ENCODE measurements at regions of chr15 and their contacts with region 1.

Region 1: GRCh38 chr15:80059786-80060355 is 395 bp downstream of the ZFAND6 start:
- DNase-seq: no peak
- H3K4me3 ChIP-seq: peak overlapping the region; percentile 64 to 90 (median 76)
- H3K27ac ChIP-seq: peak overlapping the region; percentile 95 to 100 (median 98)
- H3K4me1 ChIP-seq: peaks cover 27 to 58% (median 49%) of the 10 kb centered on the region in 6 donors
- H3K27me3 ChIP-seq: no peaks in the 10 kb centered on the region
- CTCF ChIP-seq: no peak
- POLR2A ChIP-seq: peak in 2 of 3 donors; percentile 45 to 49

Region 2: DNA sequence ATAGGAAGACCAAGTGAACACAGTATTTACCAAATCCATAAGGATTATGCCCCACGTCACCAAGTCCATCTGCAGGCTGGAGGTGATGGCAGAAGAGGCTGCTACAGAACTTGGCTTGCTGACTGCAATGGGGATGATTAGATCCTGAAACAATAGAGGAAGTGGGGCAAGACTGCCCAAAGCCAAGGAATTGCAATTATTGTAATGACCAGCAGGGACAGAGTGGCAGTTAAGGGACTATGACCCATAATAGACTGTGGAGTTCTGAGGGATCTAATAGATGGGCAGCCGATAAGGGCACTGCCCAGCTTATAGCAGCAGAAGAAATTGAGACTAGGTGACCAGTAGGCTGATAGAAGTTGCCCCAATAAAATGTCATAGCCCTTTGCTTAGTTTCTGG is 519.3 kb before region 1 on chr15:
- intact Hi-C with region 1: no loop called
- DNase-seq: no peak
- H3K4me3 ChIP-seq: no peak overlapping the region
- H3K27ac ChIP-seq: no peak overlapping the region
- H3K4me1 ChIP-seq: no peaks in the 10 kb centered on the region
- H3K27me3 ChIP-seq: no peaks in the 10 kb centered on the region
- CTCF ChIP-seq: no peak
- POLR2A ChIP-seq: no peak

Region 3: DNA sequence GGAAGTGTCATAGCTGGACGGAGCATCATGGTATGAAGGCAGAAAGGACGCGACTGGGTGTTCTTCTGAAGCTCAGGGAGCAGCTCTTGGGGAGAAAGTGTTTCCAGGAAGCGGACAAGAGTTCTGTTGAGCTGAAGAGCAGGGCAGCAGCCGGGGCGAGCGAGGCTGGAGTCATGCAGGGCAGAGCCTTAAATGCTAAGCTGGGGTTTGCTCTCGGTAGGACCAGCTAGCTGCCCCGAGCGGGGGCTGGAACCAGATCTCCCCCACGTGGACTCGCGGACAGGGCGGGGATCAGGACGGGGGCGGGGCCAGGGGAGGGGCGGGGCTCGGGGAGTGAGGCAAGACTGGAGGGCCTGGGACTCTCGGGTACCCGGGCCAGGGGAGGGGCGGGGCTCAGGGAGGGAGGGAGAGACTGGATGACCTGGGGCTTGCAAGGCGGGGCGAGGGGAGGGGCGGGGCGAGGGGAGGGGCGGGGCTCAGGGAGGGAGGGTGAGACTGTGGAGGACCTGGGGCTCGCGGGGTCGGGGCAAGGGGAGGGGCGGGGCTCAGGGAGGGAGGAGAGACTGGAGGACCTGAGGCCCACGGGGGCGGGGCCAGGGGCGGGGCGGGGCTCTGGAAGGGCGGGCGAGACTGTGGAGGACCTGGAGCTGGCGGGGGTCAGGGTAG is 92.4 kb after region 1 on chr15:
- intact Hi-C with region 1: loop called (anchors 5 kb)
- DNase-seq: peak; percentile 97
- H3K4me3 ChIP-seq: peak overlapping the region; percentile 48 to 89 (median 71)
- H3K27ac ChIP-seq: peak overlapping the region; percentile 42 to 87 (median 82)
- H3K4me1 ChIP-seq: peaks cover 8 to 55% (median 25%) of the 10 kb centered on the region in 6 donors
- H3K27me3 ChIP-seq: no peaks in the 10 kb centered on the region
- CTCF ChIP-seq: no peak
- POLR2A ChIP-seq: no peak

Region 4: DNA sequence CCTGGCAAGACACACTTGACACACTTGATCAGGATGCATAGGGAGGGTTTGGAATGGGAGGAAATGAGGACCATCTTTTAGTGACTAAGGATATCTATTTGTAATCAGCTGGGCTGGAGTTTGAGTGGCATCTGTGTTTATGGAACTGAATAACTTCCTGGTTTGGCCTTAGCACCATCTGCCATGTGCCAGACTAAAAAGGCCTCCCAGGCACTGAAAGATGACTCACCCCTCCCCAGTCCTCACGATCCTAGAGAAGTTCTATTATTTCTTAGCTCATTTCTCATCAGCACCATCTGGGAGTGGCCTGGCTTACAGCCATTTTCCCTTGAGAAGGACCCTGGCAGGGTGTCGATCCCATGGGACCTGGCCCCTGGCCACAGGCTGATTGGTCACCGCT is 216.1 kb after region 1 on chr15:
- intact Hi-C with region 1: no loop called
- DNase-seq: no peak
- H3K4me3 ChIP-seq: no peak overlapping the region
- H3K27ac ChIP-seq: no peak overlapping the region
- H3K4me1 ChIP-seq: no peaks in the 10 kb centered on the region
- H3K27me3 ChIP-seq: peaks cover 0 to 2% (median 0%) of the 10 kb centered on the region in 7 donors
- CTCF ChIP-seq: no peak
- POLR2A ChIP-seq: no peak

Measured in spleen (tissue), 13 donors.